Activated CD4-positive, alpha-beta T cell treated with anti-CD3 and anti-CD28 coated beads for 36 hours (primary cell): ENCODE measurements at regions of chr6 and their contacts with region 1.

Region 1: DNA sequence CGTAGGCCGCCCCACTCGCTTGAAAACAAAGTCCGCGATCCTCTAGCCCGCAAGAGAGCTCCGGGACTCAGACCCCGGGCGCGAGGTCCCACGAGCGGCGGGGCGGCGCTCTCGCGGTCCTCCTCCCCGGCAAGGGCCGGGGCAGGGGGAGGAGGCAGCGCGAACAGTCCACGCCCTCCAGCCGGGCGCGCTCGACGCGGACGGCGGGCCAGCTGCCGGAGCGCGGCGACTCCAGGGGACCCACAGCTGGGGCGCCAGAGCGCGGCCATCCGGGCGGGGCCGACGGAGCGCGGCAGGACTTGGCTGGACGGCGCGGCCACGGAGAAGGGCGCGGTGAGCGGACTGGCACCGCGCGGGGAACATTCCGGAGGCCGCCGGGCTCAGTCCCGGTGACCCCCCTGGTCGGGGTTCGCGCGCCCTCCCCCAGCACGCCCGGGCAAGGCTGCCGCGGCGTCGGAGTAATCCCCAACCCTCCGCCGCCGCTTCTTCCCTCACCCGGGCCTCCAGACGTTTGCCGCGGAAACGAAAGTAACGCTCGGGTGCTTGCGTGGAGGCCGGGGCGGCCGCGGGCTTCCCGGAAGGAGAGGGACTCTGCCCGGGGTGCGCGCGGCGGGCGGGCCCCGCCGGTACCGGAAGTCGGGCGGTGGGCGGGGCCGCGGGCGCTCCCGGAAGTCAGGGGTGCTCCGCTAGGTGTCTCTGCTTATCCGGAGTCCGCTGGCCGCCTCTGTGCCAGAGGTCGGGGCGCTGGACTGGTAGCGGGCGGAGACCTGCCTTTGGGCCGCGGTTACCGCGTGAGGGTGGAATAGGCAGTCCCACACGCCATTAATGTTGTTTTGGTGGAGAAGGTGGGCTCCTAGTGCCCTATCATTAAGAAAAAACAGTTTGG is at the start of gene RIPK1:
- DNase-seq: peak; percentile 97
- ATAC-seq: peak; percentile 84
- H3K4me3 Mint-ChIP-seq: peak within 1 kb of the TSS; percentile 96
- H3K27ac Mint-ChIP-seq: peak within 1 kb of the TSS; percentile 98
- H3K4me1 Mint-ChIP-seq: peaks cover 61% of the 10 kb centered on the region
- H3K27me3 Mint-ChIP-seq: no peaks in the 10 kb centered on the region
- total RNA-seq, gene RIPK1: 17.4 to 19.3 TPM

Region 2: GRCh38 chr6:2596222-2596621 is 472.4 kb before region 1 on chr6:
- CTCF ChIA-PET with region 1: no interaction called
- POLR2A ChIA-PET with region 1: no interaction called
- intact Hi-C with region 1: no loop called
- DNase-seq: peak; percentile 9
- ATAC-seq: no peak
- H3K4me3 Mint-ChIP-seq: no peak overlapping the region
- H3K27ac Mint-ChIP-seq: no peak overlapping the region
- H3K4me1 Mint-ChIP-seq: no peaks in the 10 kb centered on the region
- H3K27me3 Mint-ChIP-seq: no peaks in the 10 kb centered on the region

Region 3: DNA sequence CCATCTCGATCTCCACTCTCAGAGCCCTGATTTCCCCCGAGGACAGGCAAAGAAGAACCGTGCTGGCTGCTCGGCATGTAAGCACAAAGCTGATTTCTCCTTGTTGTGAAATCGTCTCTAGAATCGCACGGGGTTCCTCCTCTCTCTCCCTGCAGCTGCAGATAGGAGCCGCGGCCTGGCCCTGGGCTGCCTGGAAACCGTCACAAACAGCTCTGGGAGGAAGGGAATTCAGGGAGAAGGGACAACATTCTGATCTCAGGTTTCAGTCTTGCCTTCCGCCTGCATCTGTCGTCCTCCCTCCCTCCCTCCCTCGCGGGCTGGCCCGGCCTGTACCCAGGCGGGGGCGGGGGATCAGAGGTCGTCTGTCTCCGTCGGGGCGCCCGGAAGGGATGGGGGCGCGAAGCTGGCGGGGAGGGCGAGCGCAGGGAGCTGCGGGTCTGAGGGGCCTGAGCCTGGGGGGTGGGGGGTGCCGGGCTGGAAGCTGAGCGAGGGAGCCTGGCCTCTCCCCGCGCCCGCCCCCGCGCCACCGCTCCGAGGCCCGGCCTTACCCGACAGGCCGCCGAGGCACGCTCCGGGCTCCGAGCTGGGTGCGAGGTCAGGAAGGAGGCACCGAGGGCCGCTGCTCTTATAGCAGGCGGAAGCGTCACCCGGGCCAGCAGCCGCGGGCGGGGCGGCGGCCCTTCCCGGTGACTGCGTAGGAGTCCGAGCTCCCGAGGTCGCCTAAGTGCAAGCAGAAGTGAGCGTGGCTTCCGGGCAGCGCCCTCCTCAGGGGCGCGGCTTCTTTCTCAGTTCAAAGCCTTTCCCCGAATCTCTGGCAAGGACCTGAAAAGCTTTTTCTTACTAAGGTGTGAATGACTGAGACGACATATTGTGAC is 227.1 kb before region 1 on chr6 and contains the start of gene SERPINB1:
- CTCF ChIA-PET with region 1: interaction called, 4 read pairs
- POLR2A ChIA-PET with region 1: interaction called, 5 read pairs
- intact Hi-C with region 1: loop called (anchors 2 to 5 kb)
- DNase-seq: peak; percentile 96
- ATAC-seq: peak; percentile 86
- H3K4me3 Mint-ChIP-seq: peak within 1 kb of the TSS; percentile 96
- H3K27ac Mint-ChIP-seq: peak within 1 kb of the TSS; percentile 91
- H3K4me1 Mint-ChIP-seq: peaks cover 67% of the 10 kb centered on the region
- H3K27me3 Mint-ChIP-seq: no peaks in the 10 kb centered on the region
- total RNA-seq, gene SERPINB1: 200 to 243 TPM

Region 4: GRCh38 chr6:2940010-2940850 is 128.3 kb before region 1 on chr6:
- CTCF ChIA-PET with region 1: interaction called, 5 read pairs
- POLR2A ChIA-PET with region 1: interaction called, 4 read pairs
- intact Hi-C with region 1: loop called (anchors 2 to 5 kb)
- DNase-seq: peak; percentile 92
- ATAC-seq: peak; percentile 84
- H3K4me3 Mint-ChIP-seq: peak overlapping the region; percentile 50
- H3K27ac Mint-ChIP-seq: peak overlapping the region; percentile 94
- H3K4me1 Mint-ChIP-seq: peaks cover 67% of the 10 kb centered on the region
- H3K27me3 Mint-ChIP-seq: no peaks in the 10 kb centered on the region

Region 5: GRCh38 chr6:3052481-3053230 is 15.9 kb before region 1 on chr6:
- CTCF ChIA-PET with region 1: interaction called, 11 read pairs
- POLR2A ChIA-PET with region 1: no interaction called
- intact Hi-C with region 1: loop called in 1 of 2 experiments (anchors 1 kb)
- DNase-seq: no peak
- ATAC-seq: no peak
- H3K4me3 Mint-ChIP-seq: peak overlapping the region; percentile 69
- H3K27ac Mint-ChIP-seq: no peak overlapping the region
- H3K4me1 Mint-ChIP-seq: peaks cover 15% of the 10 kb centered on the region
- H3K27me3 Mint-ChIP-seq: no peaks in the 10 kb centered on the region

Region 6: DNA sequence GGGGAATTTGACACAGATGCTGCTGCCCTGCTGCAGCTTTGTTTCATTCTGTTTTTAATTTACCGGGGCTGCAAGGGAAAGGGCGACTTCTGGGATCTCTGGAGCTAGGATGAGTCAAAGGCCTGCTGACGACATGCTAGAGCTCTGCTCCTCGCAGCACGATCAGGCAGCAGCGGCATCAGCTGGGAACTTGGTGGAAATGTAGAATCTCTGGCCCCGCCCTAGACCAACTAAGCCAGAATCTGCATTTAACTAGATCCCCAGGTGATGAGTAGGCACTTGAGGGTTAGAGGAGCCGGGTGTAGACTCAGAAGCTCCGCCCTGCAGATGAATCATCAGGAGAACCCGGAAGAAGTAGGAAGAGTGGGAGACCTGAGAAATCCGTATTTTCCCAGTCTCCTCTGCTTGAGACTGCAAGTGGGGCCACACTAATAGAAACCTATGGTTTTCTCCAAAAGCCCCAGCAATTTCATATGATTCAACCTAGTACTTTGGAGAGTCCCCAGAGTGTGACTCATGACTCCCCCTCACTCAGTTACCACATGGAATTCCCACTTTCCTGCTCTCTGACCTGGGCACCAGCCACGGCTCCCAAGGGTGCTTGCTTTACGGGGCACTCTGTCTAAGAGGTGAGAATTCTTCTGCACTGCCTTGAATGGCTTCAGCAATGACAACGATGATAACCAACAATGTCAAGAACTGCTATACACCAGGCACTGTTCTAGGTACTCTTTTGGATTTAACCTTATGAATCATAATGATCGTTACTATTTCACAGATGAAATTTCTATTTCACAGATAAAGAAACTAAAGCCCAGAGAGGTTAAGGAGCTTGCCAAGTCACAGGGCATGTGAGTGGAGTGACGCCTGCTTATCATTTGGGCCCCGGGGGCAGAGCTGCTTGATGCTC is 140.8 kb after region 1 on chr6:
- CTCF ChIA-PET with region 1: no interaction called
- POLR2A ChIA-PET with region 1: interaction called, 3 read pairs
- intact Hi-C with region 1: loop called in 1 of 2 experiments (anchors 1 kb)
- DNase-seq: peak; percentile 80
- ATAC-seq: peak; percentile 87
- H3K4me3 Mint-ChIP-seq: peak overlapping the region; percentile 32
- H3K27ac Mint-ChIP-seq: peak overlapping the region; percentile 86
- H3K4me1 Mint-ChIP-seq: peaks cover 28% of the 10 kb centered on the region
- H3K27me3 Mint-ChIP-seq: peaks cover 34% of the 10 kb centered on the region

Region 7: DNA sequence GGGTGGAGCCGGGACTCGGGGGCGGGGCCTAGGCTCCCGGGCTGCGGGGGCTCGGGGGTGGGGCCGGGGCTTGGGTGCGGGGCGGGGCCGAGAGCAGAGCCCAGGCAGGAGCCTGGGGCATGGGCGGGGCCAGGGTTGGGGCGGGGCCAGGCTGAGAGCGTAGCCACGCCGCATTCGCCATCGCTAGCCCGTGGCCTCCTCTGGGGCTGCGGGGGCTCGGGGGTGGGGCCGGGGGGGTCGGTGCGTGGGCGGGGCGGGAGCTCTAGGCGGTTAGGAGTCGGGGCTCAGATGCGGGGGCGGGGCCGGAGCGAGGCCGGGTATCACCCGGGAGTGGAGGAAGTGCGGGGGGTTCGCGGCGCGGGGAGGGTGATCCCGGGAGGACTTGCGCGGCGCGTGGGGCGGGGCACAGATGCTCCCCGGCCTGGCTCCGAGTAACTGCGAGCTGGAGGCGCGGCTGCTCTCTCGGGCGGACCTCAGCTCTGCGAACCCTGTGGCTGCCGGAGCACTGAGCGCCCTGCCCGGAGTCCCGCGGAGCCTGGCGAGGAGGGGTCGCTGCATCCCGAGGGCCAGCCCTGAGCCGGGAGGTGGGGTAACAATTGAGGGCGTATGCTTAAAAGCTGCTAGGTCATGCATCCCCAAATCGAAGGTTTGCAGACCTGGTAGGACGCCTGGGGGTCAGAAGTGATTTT is 1067.2 kb after region 1 on chr6:
- CTCF ChIA-PET with region 1: no interaction called
- POLR2A ChIA-PET with region 1: no interaction called
- intact Hi-C with region 1: loop called (anchors 5 kb)
- DNase-seq: peak; percentile 98
- ATAC-seq: peak; percentile 92
- H3K4me3 Mint-ChIP-seq: peak overlapping the region; percentile 79
- H3K27ac Mint-ChIP-seq: peak overlapping the region; percentile 85
- H3K4me1 Mint-ChIP-seq: peaks cover 46% of the 10 kb centered on the region
- H3K27me3 Mint-ChIP-seq: no peaks in the 10 kb centered on the region